ENCODE measurements at regions of chr10 and their contacts with region 1.

Region 1: DNA sequence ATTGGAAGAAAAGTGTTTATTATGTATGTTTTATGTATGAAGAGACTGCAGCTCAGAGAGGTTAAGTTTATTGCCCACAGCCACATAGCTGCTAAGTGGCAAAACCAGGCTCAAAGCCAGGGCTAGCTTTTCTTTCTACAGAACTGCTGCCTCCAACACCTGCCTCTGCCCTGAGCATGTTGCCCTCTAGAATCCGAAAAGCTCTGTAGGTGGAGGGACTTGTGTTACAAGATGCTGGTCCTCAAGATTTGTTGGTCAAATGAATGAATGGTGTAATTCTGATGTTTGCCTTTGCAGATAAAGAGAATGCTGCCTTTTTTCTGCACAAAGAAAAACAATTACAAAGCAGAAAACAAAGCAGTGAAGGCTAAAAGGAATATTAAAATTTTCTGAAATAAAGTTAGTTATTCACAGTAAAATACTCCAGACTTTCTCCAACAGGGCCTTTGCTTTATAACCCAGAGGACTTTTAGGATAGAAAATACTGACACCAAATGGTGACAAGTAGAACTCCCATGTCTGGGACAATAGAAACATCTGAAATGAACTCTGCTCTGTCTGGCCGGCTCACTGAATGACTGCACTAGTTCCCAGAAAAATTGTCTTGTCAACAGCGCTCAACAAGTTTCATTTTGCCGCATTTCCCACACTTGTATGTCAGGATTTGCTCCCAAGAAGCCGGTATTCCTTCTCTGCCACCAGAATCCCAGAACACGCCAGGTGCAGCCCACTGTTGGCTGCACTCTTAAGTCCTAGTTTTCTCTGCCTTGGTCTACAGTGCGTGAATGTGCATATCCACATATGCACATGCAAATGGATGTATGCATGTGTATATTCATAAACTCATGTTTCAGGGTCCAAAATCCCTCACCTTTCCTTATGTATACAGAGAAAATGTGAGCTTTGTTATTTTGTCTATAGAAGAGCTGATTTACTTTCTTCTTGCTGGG is 11.0 kb upstream of the DNTT start:
- DNase-seq: peak; percentile 54
- ATAC-seq: peak; percentile 82
- H3K4me3 ChIP-seq: no peak overlapping the region
- H3K27ac ChIP-seq: no peak overlapping the region
- H3K4me1 ChIP-seq: no peaks in the 10 kb centered on the region
- H3K27me3 ChIP-seq: peaks cover 49% of the 10 kb centered on the region
- CTCF ChIP-seq: peak; percentile 63

Region 2: DNA sequence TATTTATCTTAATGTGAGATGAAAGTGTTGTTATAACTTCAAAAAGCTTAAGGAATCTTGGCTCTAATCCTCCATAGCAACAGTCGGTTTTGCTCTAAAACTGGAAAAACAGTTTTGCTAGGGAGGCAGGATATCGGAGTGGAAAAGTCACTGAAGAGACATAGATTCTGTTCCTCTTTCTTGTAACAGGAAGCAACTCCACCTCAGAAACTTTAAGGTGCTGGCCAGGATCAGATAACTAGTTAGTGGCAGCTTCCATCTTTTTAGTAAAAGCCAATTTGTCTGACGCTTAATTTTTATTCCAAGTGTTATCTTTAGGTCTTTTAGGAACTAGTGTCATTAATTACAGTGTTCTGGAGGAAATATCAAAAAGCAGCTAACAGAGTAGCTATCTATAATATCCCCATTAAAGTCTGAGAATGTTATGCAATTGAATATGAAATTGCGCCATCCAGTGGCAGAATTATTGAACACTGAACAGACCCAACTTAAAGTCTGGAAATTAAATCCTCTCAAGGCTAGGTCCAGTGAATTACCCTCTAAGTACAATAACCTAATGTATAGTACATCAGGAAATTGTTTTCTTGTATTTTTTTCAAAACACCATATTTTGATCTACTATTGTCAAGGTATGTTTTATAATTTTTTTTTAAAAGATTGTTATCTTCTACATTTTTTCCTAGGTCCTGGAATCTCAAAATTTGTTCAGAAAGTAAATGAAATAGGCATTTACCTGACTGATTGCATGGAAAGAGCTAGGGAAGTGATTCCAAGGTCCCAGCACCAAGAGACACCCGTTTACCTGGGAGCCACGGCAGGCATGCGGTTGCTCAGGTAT is 451.4 kb before region 1 on chr10:
- CTCF ChIA-PET with region 1: no interaction called
- POLR2A ChIA-PET with region 1: no interaction called
- intact Hi-C with region 1: loop called (anchors 10 kb)
- DNase-seq: peak; percentile 72
- ATAC-seq: peak; percentile 43
- H3K4me3 ChIP-seq: no peak overlapping the region
- H3K27ac ChIP-seq: no peak overlapping the region
- H3K4me1 ChIP-seq: no peaks in the 10 kb centered on the region
- H3K27me3 ChIP-seq: peaks cover 22% of the 10 kb centered on the region
- CTCF ChIP-seq: peak; percentile 74

Region 3: GRCh38 chr10:96017191-96017687 is 276.0 kb before region 1 on chr10:
- CTCF ChIA-PET with region 1: no interaction called
- POLR2A ChIA-PET with region 1: no interaction called
- intact Hi-C with region 1: loop called (anchors 1 kb)
- DNase-seq: peak; percentile 80
- ATAC-seq: peak; percentile 90
- H3K4me3 ChIP-seq: no peak overlapping the region
- H3K27ac ChIP-seq: no peak overlapping the region
- H3K4me1 ChIP-seq: no peaks in the 10 kb centered on the region
- H3K27me3 ChIP-seq: peaks cover 28% of the 10 kb centered on the region
- CTCF ChIP-seq: peak; percentile 77

Region 4: GRCh38 chr10:96229568-96230030 is 63.6 kb before region 1 on chr10:
- CTCF ChIA-PET with region 1: interaction called, 4 read pairs
- POLR2A ChIA-PET with region 1: no interaction called
- intact Hi-C with region 1: loop called (anchors 10 kb)
- DNase-seq: peak; percentile 69
- ATAC-seq: peak; percentile 58
- H3K4me3 ChIP-seq: no peak overlapping the region
- H3K27ac ChIP-seq: no peak overlapping the region
- H3K4me1 ChIP-seq: no peaks in the 10 kb centered on the region
- H3K27me3 ChIP-seq: peaks cover 12% of the 10 kb centered on the region; the same call in 1 of the 2 replicates
- CTCF ChIP-seq: peak; percentile 84